Adrenal gland (tissue), 19 donors: ENCODE measurements at regions of chr16 and their contacts with region 1.

Region 1: DNA sequence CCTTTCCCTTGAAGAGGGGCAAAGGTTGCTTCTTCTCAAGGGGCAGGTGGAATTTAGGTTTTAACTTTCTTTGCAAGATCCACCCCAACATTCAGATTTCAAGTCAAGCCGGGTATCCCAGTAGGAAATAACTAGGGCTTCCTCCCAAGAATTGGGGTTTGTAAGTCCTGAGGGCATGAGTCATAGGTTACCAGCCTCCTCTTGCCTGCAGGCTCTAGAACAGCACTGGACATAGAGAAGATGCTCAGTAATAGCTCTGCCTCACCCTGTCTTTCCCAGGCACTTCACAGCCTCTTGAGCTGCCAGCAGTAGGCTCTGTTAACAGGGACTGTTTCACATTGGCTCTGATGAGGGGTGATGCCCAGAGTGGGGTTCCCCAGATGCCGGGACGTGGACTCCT is 35.8 kb upstream of the ZFP90 start:
- DNase-seq: no peak
- H3K4me3 ChIP-seq: no peak overlapping the region
- H3K27ac ChIP-seq: no peak overlapping the region
- H3K4me1 ChIP-seq: no peaks in the 10 kb centered on the region
- H3K27me3 ChIP-seq: no peaks in the 10 kb centered on the region
- CTCF ChIP-seq: no peak
- POLR2A ChIP-seq: no peak

Region 2: DNA sequence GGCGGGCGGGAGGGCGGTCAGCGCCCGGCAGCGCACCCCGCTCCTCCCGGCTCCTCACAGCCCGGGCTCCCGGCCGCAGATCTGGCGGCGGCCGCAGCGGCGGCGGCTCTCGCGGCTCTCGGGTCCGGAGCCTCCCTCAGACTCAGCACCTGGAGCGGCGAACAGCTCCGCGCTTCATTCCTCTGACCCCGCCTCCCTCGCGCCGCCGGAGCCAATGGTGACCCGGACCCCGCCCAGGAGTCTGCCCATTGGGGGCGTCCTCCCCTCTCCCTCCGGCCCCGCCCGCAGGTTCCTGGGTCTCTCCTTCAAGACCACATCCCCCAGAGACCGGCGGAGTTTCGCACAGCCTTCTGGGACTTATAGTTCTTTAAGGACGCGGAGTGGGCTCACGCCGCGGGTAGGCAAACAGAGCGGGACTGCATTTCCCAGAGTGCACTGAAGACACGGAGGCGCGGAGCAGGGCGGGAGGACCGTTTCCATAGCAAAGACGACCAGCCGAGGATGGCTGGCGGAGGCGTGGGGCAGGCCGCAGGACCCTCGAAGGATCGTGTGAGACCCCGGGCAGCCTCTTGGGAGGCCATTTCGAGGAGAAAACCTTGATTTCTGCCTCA is 54.9 kb before region 1 on chr16 and contains the start of gene SMPD3:
- intact Hi-C with region 1: loop called (anchors 5 kb)
- DNase-seq: peak; percentile 99 to 100 (median 99)
- H3K4me3 ChIP-seq: peak within 1 kb of the TSS in 2 of 4 donors; percentile 18 to 49
- H3K27ac ChIP-seq: no peak within 1 kb of the TSS
- H3K4me1 ChIP-seq: peaks cover 11 to 16% of the 10 kb centered on the region in 2 donors
- H3K27me3 ChIP-seq: no peaks in the 10 kb centered on the region
- CTCF ChIP-seq: peak in 2 of 6 experiments; percentile 15 to 17
- POLR2A ChIP-seq: peak; percentile 50 to 83
- total RNA-seq, gene SMPD3: 0.32 to 7.8 (median 0.99) TPM in 7 of 9 donors, not detected in the others